ENCODE measurements at regions of chr12 and their contacts with region 1.

Region 1: DNA sequence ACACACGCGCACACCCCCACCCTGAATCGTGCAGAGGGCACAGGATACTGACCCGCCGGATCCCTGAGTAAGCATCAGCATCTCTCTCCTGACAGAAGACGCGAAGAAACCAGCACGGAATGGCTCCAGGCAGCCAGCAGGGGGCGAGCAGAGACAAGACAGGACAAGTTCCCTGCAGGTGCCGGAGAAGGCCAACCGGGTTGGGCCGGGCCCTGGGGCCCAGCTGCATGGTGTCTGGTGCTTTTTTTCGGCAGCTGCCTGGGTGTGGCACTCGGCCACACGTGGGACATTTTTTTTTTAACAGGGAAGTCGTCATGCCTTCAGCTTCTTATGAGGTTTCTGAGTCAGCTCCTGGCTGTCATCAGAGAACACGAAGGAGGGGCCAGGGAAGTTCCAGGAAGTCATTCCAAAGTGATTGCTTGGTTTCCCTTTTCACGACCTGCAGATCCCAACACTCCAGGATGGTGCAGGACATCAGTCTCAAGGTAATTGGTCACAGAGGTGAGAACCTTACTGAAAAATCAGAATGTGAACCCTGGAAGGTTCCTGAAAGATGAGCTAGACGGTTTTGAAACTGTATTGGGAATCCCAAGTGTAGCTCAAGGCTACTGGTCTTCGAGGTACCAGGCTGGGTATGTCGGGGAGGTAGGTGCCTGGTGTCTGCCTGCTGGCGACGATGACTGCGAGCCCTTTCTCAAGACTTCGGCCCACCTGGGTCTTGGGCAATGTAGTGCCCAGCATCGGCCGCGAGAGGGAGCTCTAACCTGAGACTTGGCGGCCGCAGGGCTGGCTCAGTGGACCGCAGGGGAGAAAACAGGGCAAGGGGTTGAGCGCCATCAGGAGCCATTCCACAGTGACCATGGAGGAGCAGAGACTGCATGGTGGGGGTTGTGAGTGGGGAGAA is 190.8 kb upstream of the PRMT8 start:
- DNase-seq: peak; percentile 99
- H3K4me3 ChIP-seq: peak overlapping the region in 2 of 3 experiments; percentile 9 to 38
- H3K27ac ChIP-seq: peak overlapping the region; percentile 94
- H3K4me1 ChIP-seq: peaks cover 46% of the 10 kb centered on the region
- H3K27me3 ChIP-seq: no peaks in the 10 kb centered on the region
- CTCF ChIP-seq: peak; percentile 93 to 99

Region 2: DNA sequence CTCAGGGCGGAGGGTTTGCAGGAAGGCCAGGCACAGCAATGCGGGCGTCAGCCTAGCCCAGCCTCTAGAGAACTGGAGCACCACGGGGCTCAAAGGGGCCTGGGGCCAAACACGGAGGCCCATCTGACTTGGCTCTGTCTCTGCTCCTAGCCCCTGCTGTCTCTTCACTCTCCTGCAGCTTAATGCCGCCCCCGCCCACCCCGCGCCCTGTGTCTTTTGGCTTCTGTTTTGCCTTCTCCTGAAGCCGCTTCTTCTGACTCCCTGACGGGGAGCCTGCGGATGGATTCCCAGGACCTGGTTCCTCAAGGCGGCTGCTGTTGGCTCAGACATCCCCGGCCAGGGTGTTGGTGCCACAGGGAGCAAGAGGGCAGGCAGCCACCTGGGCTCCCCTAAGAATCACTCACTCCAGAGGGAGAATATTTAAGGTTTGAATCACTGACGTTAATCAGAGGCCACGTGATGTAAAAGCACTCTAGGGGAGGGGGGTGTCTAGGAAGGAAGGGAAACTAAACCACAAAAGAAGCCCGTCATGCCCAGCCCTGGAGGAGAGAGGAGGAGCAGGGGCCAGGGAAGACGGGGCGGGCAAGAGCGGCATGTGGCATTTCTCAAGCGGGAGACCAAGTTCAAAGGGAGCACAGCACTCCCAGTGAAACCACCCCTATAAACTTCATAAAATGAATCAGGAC is 154.0 kb after region 1 on chr12:
- CTCF ChIA-PET with region 1: interaction called, 6 read pairs
- dilution Hi-C with region 1: no loop called
- in situ Hi-C with region 1: no loop called
- intact Hi-C with region 1: loop called (anchors 1 kb)
- DNase-seq: peak; percentile 99
- H3K4me3 ChIP-seq: no peak overlapping the region
- H3K27ac ChIP-seq: peak overlapping the region; percentile 94
- H3K4me1 ChIP-seq: peaks cover 51% of the 10 kb centered on the region
- H3K27me3 ChIP-seq: no peaks in the 10 kb centered on the region
- CTCF ChIP-seq: no peak

Region 3: DNA sequence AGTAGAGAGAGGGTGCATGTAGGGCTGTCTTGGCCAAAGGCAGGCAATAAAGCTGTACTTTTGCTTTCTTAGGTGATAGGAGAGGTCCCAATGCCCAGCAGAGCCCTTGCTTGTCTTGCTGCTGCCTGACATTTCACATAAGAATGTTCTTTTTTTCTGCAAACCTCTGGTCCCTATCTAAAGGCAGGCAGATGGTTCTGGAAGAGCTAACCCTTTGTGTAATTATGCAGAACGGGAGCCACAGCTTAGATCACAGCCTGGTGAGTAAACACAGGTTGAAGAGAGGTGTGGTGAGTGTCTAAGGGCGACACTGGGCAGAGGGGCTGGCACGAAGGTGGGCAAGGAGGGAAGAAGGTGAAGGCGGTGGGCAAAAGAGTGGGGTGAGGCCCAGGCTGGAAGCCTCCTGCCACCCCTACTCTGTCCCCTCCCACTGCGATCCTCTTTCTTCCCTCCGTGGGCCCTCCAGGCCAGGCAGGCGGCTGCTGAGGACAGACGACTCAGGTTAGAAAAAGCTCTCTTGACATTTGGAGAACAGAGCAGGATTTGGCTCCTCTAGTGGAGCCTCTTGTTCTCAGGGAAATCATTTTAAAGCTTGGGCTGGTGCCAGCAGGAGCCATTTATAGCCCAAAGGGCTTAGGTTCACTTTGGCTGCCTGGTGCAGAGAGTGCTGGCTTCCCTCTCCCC is 233.7 kb after region 1 on chr12:
- CTCF ChIA-PET with region 1: no interaction called
- dilution Hi-C with region 1: no loop called
- in situ Hi-C with region 1: loop called in 1 of 2 experiments (anchors 25 kb)
- intact Hi-C with region 1: no loop called
- DNase-seq: no peak
- H3K4me3 ChIP-seq: no peak overlapping the region
- H3K27ac ChIP-seq: no peak overlapping the region
- H3K4me1 ChIP-seq: no peaks in the 10 kb centered on the region
- H3K27me3 ChIP-seq: no peaks in the 10 kb centered on the region
- CTCF ChIP-seq: no peak

Region 4: GRCh38 chr12:3658327-3659163 is 358.4 kb after region 1 on chr12:
- CTCF ChIA-PET with region 1: no interaction called
- dilution Hi-C with region 1: no loop called
- in situ Hi-C with region 1: no loop called
- intact Hi-C with region 1: loop called (anchors 5 kb)
- DNase-seq: peak; percentile 6
- H3K4me3 ChIP-seq: no peak overlapping the region
- H3K27ac ChIP-seq: no peak overlapping the region
- H3K4me1 ChIP-seq: peaks cover 3% of the 10 kb centered on the region
- H3K27me3 ChIP-seq: peaks cover 10% of the 10 kb centered on the region
- CTCF ChIP-seq: peak; percentile 36 to 39

Region 5: DNA sequence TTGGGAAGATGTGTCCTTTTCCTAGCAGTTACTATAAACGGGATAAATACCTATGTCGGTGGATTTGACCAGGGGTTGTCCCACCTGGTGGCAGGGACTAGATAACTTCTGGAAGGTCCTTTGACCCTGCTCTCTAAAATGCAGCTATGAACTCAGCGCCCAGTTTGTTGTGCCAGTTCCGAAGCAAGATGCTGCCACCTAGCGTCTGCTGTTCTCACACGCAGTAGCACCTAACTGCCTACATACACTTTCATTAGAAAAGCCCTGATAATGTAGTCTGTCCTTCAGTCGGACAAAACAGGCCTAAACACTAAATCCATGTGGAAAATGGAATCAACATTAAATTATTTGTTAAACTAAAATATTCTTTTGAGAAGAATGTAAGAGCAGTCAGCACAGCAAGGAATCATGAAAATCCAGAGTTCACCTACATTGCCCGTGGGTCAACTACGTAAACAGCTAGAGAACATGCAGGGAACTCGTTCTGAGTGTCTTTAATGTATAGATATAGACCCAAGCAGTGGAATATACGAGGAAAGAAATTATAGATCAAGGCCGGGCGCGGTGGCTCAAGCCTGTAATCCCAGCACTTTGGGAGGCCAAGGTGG is 503.8 kb after region 1 on chr12:
- CTCF ChIA-PET with region 1: interaction called, 8 read pairs
- dilution Hi-C with region 1: loop called (anchors 25 kb)
- in situ Hi-C with region 1: loop called in 1 of 2 experiments (anchors 10 kb)
- intact Hi-C with region 1: loop called (anchors 1 kb)
- DNase-seq: peak; percentile 41
- H3K4me3 ChIP-seq: no peak overlapping the region
- H3K27ac ChIP-seq: no peak overlapping the region
- H3K4me1 ChIP-seq: no peaks in the 10 kb centered on the region
- H3K27me3 ChIP-seq: no peaks in the 10 kb centered on the region
- CTCF ChIP-seq: peak; percentile 94 to 95

Region 6: DNA sequence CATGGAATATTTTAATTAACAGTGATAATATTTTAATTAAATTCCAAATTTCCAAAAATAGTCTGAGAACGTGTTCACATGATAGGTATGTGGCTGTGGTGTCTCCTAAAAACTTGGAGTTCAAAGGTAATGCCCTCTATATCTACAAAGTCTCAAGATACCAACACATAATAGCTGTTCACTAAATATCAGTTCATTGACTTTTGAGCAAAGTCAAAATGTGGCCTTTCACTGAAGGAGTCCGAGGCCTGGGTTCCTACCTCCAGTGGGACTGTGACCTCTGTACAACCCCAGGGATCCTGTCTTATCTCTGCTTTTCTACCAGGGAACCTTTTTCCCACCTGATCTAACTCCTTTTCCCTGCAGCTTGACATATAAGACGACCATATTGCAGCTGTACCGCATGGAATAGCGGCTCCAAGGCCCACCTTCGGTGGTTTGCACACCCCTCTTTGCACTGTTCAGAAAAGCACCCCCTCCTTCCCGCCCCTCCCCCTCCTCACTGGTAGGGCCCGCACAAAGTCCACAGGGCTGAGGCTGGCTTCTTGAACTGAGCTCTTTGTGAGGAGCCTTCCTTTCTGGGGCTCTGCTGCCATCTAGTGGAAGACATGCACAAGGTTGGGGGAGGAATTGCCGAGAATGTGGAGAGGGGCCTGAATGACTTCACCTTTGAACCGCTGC is 976.5 kb after region 1 on chr12:
- CTCF ChIA-PET with region 1: interaction called, 3 read pairs
- dilution Hi-C with region 1: no loop called
- in situ Hi-C with region 1: no loop called
- intact Hi-C with region 1: loop called (anchors 5 kb)
- DNase-seq: peak; percentile 76
- H3K4me3 ChIP-seq: peak overlapping the region; percentile 87 to 100 (median 94)
- H3K27ac ChIP-seq: peak overlapping the region; percentile 94
- H3K4me1 ChIP-seq: peaks cover 40% of the 10 kb centered on the region
- H3K27me3 ChIP-seq: no peaks in the 10 kb centered on the region
- CTCF ChIP-seq: peak; percentile 81 to 96